GM12878 (cell line): ENCODE measurements at regions of chr9 and their contacts with region 1.

Region 1: GRCh38 chr9:38362852-38363593 is 29.5 kb upstream of the ALDH1B1 start:
- DNase-seq: peak; percentile 35
- ATAC-seq: peak; percentile 86
- H3K4me3 ChIP-seq: no peak overlapping the region
- H3K27ac ChIP-seq: no peak overlapping the region
- H3K4me1 ChIP-seq: no peaks in the 10 kb centered on the region
- H3K27me3 ChIP-seq: no peaks in the 10 kb centered on the region
- CTCF ChIP-seq: peak; percentile 50 to 84 (median 57); a peak in 5 of 6 replicates
- EP300 ChIP-seq: no peak
- POLR2A ChIP-seq: no peak
- RAD21 ChIP-seq: peak; percentile 87

Region 2: GRCh38 chr9:37746848-37747753 is 615.9 kb before region 1 on chr9:
- CTCF ChIA-PET with region 1: interaction called, 3 read pairs
- POLR2A ChIA-PET with region 1: no interaction called
- RAD21 ChIA-PET with region 1: no interaction called
- SMC1A ChIA-PET with region 1: interaction called, 4 read pairs
- in situ Hi-C with region 1: no loop called
- intact Hi-C with region 1: loop called (anchors 2 kb)
- DNase-seq: peak; percentile 3
- ATAC-seq: peak; percentile 97
- H3K4me3 ChIP-seq: no peak overlapping the region
- H3K27ac ChIP-seq: no peak overlapping the region
- H3K4me1 ChIP-seq: no peaks in the 10 kb centered on the region
- H3K27me3 ChIP-seq: no peaks in the 10 kb centered on the region
- CTCF ChIP-seq: peak; percentile 93 to 97 (median 96)
- EP300 ChIP-seq: no peak
- POLR2A ChIP-seq: no peak
- RAD21 ChIP-seq: peak; percentile 86